ENCODE measurements at regions of chr3 and their contacts with region 1.

Region 1: GRCh38 chr3:142931222-142931621 is 32.3 kb downstream of the PAQR9 start:
- DNase-seq: no peak
- H3K4me3 ChIP-seq: no peak overlapping the region
- H3K27ac ChIP-seq: no peak overlapping the region
- H3K4me1 ChIP-seq: no peaks in the 10 kb centered on the region
- H3K27me3 ChIP-seq: no peaks in the 10 kb centered on the region
- CTCF ChIP-seq: no peak
- POLR2A ChIP-seq: no peak

Region 2: DNA sequence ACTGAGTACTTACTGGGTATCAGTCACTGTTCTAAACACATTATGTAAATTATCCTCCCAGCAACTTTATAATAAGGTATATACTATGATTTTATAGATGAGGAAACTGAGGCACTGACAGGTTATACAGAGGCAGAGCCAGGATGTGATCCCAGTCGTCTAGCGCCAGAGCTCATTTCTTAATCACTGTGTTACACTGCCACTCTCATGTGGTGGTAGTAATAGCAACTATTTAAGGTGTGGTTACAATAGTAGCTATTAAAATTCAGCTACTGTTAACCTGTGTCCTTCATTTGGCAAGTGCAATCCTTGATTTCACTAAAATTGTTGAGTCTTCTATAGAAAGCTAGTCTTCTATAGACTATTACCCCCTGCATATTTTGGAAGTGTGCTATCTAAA is 250.5 kb before region 1 on chr3:
- intact Hi-C with region 1: no loop called
- DNase-seq: no peak
- H3K4me3 ChIP-seq: no peak overlapping the region
- H3K27ac ChIP-seq: no peak overlapping the region
- H3K4me1 ChIP-seq: no peaks in the 10 kb centered on the region
- H3K27me3 ChIP-seq: no peaks in the 10 kb centered on the region
- CTCF ChIP-seq: no peak
- POLR2A ChIP-seq: no peak

Region 3: DNA sequence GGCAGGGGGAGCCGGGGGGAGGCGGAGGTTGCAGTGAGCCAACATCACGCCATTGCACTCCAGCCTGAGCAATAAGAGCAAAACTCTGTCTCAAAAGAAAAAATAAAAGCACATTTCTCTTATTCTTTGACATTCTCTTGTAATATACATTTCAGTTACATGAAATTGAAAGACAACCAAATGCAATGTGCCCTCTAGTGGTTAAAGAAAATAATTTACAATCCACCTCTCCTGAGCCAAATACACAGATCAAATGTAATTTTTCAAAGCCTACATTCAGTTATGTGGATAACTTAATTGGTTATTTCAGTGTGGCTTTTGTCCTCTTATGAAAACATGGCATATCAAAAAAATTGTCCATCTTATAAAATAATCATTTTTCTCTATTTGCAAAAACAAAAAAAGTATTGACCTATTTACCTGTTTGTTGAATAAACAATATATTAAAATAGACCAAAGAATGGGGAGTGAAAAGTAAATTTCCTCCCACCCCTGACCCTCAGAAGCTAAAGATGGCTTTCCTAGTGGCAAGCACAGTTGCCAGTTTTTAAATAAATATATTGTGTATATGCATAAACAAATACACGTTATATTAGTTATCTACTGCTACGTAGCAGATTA is 56.0 kb after region 1 on chr3:
- intact Hi-C with region 1: loop called (anchors 5 to 10 kb)
- DNase-seq: no peak
- H3K4me3 ChIP-seq: no peak overlapping the region
- H3K27ac ChIP-seq: no peak overlapping the region
- H3K4me1 ChIP-seq: no peaks in the 10 kb centered on the region
- H3K27me3 ChIP-seq: no peaks in the 10 kb centered on the region
- CTCF ChIP-seq: peak; percentile 63 to 80 (median 71)
- POLR2A ChIP-seq: no peak